Ascending aorta (tissue), 2 donors: ENCODE measurements at regions of chr4 and their contacts with region 1.

Region 1: DNA sequence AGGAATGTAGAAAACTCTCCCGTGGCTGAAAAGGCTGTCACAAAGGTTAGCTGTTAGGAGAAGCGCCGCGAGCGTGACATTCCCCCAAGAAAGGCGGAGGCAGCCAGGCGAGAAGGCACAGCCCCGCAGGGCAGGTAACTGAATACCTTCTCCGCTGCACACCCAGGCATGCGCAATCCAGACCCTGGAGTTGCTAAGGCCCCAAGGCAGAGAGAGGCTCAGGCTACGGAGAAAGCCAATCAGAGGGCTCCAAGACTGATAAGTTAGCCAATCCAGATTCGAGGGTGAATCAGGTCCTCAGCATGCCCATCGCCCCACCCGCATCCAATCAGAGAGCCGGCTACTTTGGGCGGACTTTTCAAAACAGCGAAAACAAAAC is 485 bp upstream of the CCNG2 start:
- DNase-seq: peak; percentile 93 to 99
- H3K4me3 ChIP-seq: peak overlapping the region; percentile 96 to 98
- H3K27ac ChIP-seq: peak overlapping the region; percentile 92 to 97
- H3K4me1 ChIP-seq: peaks cover 0 to 7% of the 10 kb centered on the region in 2 donors
- H3K27me3 ChIP-seq: no peaks in the 10 kb centered on the region
- CTCF ChIP-seq: no peak

Region 2: GRCh38 chr4:76035141-76035540 is 1121.4 kb before region 1 on chr4:
- intact Hi-C with region 1: no loop called
- DNase-seq: no peak
- H3K4me3 ChIP-seq: no peak overlapping the region
- H3K27ac ChIP-seq: no peak overlapping the region
- H3K4me1 ChIP-seq: no peaks in the 10 kb centered on the region
- H3K27me3 ChIP-seq: no peaks in the 10 kb centered on the region
- CTCF ChIP-seq: no peak

Region 3: DNA sequence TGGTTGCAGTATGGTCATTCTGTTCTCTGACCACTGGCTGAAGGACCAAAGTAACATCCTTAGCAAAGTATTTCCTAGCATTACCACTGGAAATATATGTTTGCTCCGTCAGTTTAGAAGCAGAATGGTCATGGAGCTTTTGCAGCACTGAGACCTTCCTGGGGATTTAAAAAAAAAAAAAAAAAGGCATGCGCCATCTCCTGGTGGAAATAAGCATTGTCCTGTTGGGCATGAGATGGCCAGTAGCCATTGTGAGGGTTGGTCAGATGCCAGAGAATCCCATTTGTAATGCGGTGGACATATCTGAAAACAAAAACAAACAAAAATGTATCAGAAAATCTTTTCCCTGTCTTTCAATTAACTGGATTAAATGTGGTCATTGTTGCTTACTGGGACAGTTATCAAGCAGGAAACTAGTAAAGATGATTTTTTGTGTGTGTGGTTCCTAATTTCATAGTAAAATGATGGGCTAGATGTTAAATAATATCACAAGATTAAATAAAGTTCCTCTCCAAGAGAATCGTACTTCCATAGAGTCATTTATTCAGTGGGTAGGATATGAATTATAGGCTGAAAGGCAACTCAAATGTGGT is 398.1 kb before region 1 on chr4:
- intact Hi-C with region 1: loop called (anchors 5 kb)
- DNase-seq: no peak
- H3K4me3 ChIP-seq: no peak overlapping the region
- H3K27ac ChIP-seq: peak overlapping the region; percentile 51 to 72
- H3K4me1 ChIP-seq: peaks cover 13 to 22% of the 10 kb centered on the region in 2 donors
- H3K27me3 ChIP-seq: no peaks in the 10 kb centered on the region
- CTCF ChIP-seq: peak; percentile 51 to 78 (median 70)

Region 4: GRCh38 chr4:77075869-77076799 is 80.4 kb before region 1 on chr4 and contains the start of gene CCNI:
- intact Hi-C with region 1: loop called (anchors 1 kb)
- DNase-seq: peak; percentile 77 to 97
- H3K4me3 ChIP-seq: peak within 1 kb of the TSS; percentile 88 to 97
- H3K27ac ChIP-seq: peak within 1 kb of the TSS; percentile 99 to 100
- H3K4me1 ChIP-seq: peaks cover 4 to 5% of the 10 kb centered on the region in 2 donors
- H3K27me3 ChIP-seq: no peaks in the 10 kb centered on the region
- CTCF ChIP-seq: no peak
- total RNA-seq, gene CCNI: 140 TPM

Region 5: GRCh38 chr4:77095101-77095821 is 61.3 kb before region 1 on chr4:
- intact Hi-C with region 1: loop called (anchors 2 kb)
- DNase-seq: peak; percentile 34 to 90
- H3K4me3 ChIP-seq: no peak overlapping the region
- H3K27ac ChIP-seq: peak overlapping the region in 1 of 2 donors; percentile 51
- H3K4me1 ChIP-seq: peaks cover 0 to 8% of the 10 kb centered on the region in 2 donors
- H3K27me3 ChIP-seq: no peaks in the 10 kb centered on the region
- CTCF ChIP-seq: peak; percentile 52 to 81 (median 80)

Region 6: GRCh38 chr4:77104791-77105540 is 51.6 kb before region 1 on chr4:
- intact Hi-C with region 1: loop called (anchors 2 kb)
- DNase-seq: peak; percentile 17 to 88
- H3K4me3 ChIP-seq: peak overlapping the region; percentile 35 to 46
- H3K27ac ChIP-seq: peak overlapping the region; percentile 70 to 73
- H3K4me1 ChIP-seq: peaks cover 6 to 20% of the 10 kb centered on the region in 2 donors
- H3K27me3 ChIP-seq: no peaks in the 10 kb centered on the region
- CTCF ChIP-seq: no peak

Region 7: DNA sequence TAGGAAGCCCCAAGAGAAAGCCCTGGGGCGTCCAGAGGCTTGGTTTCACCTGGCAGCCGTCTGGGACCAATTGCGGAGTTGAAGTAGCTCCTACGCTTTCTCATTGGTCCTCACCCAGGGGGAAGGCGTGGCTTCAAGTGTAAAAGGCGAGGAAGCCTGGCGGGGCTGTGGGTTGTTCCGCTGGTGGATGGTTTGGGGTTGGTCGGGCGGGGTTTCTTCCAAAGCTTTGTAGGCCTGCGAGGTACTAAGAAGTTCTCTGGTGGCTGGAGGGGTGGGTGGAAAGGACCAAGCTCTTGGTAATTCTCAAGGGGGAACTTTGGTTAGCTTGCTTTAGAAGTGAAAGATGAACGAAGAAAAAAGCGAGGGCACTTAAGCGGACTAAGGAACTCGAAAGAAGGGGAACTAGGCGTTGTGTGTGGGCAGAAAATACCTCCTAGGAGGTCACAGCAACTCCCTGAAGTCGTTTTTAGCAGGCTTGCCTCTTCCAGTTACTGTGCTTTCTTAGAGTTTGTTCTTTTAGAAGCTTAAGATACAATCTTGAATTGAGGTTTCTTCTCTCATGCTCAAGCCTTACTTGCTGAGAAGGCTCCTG is 37.1 kb after region 1 on chr4:
- intact Hi-C with region 1: no loop called
- DNase-seq: peak; percentile 28 to 75
- H3K4me3 ChIP-seq: peak overlapping the region in 1 of 2 donors; percentile 21
- H3K27ac ChIP-seq: no peak overlapping the region
- H3K4me1 ChIP-seq: no peaks in the 10 kb centered on the region
- H3K27me3 ChIP-seq: no peaks in the 10 kb centered on the region
- CTCF ChIP-seq: no peak